ENCODE measurements at regions of chr9 and their contacts with region 1.

Region 1: GRCh38 chr9:92790542-92791527 is 26.2 kb upstream of the BICD2 start:
- DNase-seq: peak; percentile 57 to 87 (median 75)
- ATAC-seq: peak; percentile 91 to 99 (median 98)
- H3K4me3 ChIP-seq: no peak overlapping the region
- H3K27ac ChIP-seq: no peak overlapping the region
- H3K4me1 ChIP-seq: peaks cover 0 to 8% (median 0%) of the 10 kb centered on the region in 3 donors
- H3K27me3 ChIP-seq: no peaks in the 10 kb centered on the region
- CTCF ChIP-seq: peak; percentile 53 to 76 (median 65)

Region 2: DNA sequence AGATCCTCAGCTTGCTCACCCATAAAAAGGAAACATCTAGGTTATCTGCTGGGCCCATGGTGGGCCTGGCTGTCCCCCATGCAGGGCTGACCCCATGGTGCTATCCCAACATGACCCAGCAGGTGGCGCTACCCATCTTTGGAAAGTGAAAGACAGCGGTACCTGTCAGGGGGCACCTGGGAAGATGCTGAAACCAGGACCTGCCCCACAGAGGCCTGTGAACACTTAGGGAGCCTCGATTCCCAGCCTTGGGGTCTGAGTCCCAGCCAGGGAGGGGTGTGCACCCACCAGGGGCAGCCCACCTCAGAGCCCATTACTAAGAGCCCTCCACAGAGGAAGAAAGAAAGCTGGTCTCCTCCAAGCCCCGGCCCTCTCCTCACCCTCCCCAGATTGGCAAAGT is 74.3 kb before region 1 on chr9:
- intact Hi-C with region 1: loop called in 2 of 3 experiments (anchors 5 kb)
- DNase-seq: peak; percentile 25 to 95 (median 69)
- ATAC-seq: peak; percentile 51 to 83 (median 77)
- H3K4me3 ChIP-seq: no peak overlapping the region
- H3K27ac ChIP-seq: no peak overlapping the region
- H3K4me1 ChIP-seq: no peaks in the 10 kb centered on the region
- H3K27me3 ChIP-seq: no peaks in the 10 kb centered on the region
- CTCF ChIP-seq: peak; percentile 76 to 91 (median 87)